ENCODE measurements at regions of chr21 and their contacts with region 1.

Region 1: GRCh38 chr21:28745131-28746016 is 247.3 kb downstream of the LTN1 start:
- DNase-seq: peak; percentile 69
- H3K4me3 ChIP-seq: peak overlapping the region; percentile 51
- CTCF ChIP-seq: peak; percentile 69

Region 2: DNA sequence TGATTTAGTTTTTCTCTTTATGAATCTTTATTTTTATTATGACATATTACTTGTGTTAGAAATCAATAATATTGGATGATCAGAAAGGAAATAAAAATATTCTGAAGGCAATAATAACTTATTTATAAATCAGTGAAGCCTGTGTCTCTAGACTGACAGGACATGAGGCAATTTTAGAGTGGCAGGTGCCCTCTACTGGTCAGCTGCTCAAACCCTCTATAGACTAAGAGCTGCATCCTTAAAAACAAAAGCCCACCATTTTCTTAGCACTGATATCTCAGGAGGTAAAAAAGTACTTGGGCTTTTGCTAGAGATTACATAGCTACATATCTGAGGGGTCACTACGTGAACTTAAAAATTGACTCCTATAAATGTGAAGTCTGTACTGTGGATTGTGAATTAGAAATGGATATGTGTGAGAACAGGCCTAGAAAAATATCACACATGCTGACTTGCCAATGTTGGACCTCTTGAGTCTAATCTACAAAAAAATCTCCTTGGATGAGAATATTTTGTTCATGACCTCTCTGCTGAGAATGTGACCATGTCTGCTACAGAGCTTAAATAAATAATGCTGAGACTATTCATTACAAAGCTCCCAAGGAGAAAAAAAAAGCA is 1180.6 kb before region 1 on chr21:
- CTCF ChIA-PET with region 1: interaction called, 17 read pairs
- POLR2A ChIA-PET with region 1: interaction called, 4 read pairs
- DNase-seq: no peak
- H3K4me3 ChIP-seq: no peak overlapping the region
- CTCF ChIP-seq: peak; percentile 52

Region 3: DNA sequence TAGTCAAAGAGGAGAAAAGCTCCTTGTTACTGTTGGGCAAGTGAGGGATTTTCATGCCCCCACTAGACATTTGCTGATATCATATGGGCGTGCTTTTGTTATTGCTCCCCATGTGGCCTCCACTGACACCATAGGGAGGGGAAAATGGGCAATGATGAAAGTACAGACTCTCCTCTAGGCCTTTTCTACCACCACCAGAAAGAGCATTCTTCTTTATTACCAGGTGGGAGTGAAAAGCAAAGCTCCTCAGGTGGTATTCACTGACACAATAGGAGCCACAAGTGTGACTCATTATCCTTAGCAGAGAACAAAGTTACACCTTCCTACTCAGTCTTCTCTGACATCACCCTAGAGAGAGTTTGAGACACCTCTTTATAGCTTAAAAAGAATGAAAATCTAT is 419.8 kb before region 1 on chr21:
- CTCF ChIA-PET with region 1: interaction called, 10 read pairs
- POLR2A ChIA-PET with region 1: no interaction called
- DNase-seq: no peak
- H3K4me3 ChIP-seq: no peak overlapping the region
- CTCF ChIP-seq: no peak

Region 4: DNA sequence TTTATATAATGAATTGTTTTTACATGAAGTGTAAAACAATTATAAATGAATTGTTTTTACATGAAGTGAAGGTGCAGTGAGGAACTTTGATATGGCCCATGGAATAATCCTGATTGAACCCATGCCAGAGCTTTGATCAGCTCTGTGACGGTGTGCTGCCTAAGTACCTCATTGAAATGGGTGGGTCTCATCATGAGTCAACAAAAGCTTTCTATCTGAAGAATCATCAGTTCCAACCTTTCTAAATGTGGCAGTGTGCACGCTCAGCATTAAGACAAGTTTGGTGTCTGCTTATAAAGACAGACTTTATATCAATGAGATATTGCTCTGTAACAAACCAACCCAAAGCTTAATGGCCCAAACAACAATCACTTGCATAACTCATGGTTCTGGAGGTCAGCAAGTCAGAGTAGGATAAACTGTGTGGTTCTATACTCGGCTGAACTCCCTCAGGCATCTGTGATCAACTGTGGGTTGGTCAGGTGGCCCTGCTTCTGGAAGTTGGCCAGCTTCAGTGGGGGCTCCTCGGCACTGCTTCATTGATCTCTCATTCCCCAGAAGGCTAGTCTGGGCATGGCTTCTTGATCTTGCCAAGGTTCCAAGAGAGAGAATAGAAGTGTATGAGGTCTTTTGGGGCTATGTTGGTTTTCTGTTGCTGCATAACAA is 10.7 kb before region 1 on chr21:
- CTCF ChIA-PET with region 1: interaction called, 32 read pairs
- POLR2A ChIA-PET with region 1: no interaction called
- DNase-seq: no peak
- H3K4me3 ChIP-seq: no peak overlapping the region
- CTCF ChIP-seq: no peak

Region 5: DNA sequence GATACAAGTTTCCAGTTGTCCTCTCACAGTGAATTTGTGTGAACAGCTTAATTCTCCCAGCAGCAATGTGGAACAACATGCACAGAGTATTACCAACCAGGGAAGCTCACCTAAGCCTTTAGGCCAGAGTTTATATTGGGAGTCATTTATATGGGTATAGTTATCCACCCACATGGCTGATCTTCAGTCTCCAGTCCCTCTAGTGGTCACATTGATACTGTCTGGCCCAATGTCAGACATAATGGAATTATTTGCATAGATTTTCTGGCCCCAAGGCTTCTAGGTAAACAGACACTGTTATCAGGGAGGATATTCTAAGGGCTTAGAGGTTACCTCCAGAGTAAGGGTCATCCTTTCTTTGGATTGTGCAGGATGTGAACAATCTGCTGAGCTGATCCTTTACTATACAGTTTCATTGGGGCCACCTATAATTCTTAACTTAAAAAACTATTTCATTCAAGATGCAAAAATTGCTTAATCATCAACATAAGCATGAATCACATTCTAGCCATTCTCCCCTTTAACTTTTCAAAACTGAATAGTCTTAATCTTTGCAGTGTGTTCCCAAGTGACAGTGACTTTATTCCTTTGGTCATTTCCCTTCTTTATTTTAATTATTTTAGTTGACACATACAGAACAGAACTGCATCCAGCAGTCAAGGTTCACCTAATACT is 36.4 kb after region 1 on chr21:
- CTCF ChIA-PET with region 1: interaction called, 12 read pairs
- POLR2A ChIA-PET with region 1: no interaction called
- DNase-seq: no peak
- H3K4me3 ChIP-seq: no peak overlapping the region
- CTCF ChIP-seq: peak; percentile 59

Region 6: DNA sequence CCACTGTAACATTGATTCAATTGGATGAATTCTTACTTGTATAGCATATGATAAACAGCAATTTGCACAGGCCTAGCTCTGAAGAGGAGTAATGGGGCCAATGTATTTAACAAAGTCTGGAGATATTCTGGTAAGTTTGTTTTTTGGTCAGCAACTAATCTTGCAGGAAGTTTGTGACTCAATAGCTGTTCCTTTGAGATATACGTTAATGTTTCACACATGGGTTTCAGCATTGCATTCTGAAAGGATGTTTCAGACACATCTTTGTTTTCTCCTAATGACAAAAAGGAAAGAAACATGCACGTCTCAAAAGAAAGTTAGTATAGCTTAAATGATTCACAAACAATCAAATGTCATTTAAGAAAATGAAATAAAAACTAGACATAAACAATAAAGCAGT is 198.3 kb after region 1 on chr21:
- CTCF ChIA-PET with region 1: interaction called, 85 read pairs
- POLR2A ChIA-PET with region 1: no interaction called
- DNase-seq: no peak
- H3K4me3 ChIP-seq: no peak overlapping the region
- CTCF ChIP-seq: no peak